ENCODE measurements at regions of chr20 and their contacts with region 1.

Region 1: GRCh38 chr20:58481481-58482021 is 33.6 kb downstream of the APCDD1L start:
- DNase-seq: peak; percentile 63
- H3K4me3 ChIP-seq: no peak overlapping the region
- H3K27ac ChIP-seq: no peak overlapping the region
- H3K4me1 ChIP-seq: no peaks in the 10 kb centered on the region
- H3K27me3 ChIP-seq: no peaks in the 10 kb centered on the region

Region 2: GRCh38 chr20:58839474-58839874 is 357.9 kb after region 1 on chr20:
- in situ Hi-C with region 1: loop called (anchors 25 kb)
- DNase-seq: peak; percentile 52
- H3K4me3 ChIP-seq: peak overlapping the region; percentile 48
- H3K27ac ChIP-seq: no peak overlapping the region
- H3K4me1 ChIP-seq: no peaks in the 10 kb centered on the region
- H3K27me3 ChIP-seq: peaks cover 44% of the 10 kb centered on the region